Activated naive CD4-positive, alpha-beta T cell treated with anti-CD3 and anti-CD28 coated beads for 36 hours (primary cell): ENCODE measurements at regions of chr13 and their contacts with region 1.

Region 1: DNA sequence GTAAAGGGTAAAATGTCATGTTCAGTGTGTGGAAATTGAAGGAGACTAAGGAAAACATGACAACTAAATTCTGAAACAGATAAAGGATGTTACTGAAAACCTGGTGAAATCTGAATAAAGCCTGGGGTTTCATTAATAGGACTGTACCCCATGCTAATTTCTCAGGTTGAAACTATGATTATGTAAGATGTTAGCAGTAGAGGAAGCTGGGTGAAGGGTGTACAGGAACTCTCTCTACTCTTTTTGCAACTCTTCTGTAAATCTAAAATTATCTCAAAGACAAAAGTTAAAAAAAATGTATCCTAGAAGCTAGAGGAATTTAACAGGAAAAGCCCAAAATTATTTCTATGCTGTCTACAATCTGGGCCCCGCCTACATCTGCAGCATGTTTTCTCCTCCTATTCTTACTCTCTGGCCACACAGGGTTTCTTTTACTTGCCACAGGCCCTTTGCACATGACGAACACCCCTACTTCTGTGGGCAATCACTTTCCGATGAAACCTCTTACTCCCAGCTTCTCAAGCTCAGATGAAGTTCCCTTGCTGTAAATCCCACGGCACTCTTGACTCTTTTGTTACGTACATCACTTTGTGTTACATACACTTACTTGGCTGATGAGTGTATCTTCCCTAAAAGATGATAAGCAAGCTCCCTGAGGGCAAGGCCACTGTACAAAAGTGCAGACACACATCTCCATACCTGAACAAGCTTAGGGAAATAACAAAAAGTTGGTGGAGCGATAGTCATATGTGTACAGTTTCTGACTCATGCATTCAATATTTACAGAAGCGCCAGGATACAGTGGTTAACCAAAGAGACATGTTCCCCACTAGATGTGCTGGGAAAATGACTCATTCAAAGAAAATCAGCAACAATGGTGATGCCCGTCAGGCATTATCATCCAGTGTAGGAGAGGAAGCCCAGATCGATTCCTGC is 32.6 kb downstream of the RUBCNL start:
- DNase-seq: peak; percentile 68
- H3K4me3 Mint-ChIP-seq: no peak overlapping the region
- H3K27ac Mint-ChIP-seq: peak overlapping the region; percentile 94
- H3K4me1 Mint-ChIP-seq: peaks cover 24% of the 10 kb centered on the region
- H3K27me3 Mint-ChIP-seq: no peaks in the 10 kb centered on the region

Region 2: DNA sequence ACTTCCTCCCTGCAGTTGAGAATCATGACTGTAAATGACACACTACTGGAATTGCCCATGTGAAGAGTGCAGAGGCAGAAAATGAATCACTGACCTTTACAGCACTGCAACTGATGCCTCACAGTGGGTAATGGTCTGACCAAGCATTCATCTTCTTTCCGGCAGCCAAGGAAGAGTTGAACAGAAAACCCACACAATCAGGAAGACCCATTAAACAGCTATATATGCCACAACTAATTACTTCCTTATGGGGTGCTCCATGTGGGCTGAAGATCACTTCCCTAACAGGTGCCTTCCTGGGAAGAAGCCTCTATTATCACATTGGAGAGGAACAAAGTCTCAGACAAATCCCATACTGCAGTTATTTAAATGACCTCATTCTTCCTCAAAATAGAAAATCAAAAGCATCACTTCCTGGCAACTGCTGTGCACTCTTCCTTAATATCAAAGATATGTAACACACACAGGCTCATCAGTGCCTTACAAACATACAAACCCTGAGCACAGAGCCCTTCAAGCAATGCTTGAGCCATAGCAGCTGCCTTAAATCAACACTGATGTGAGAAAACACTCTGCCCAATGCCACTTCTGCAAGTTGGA is 13.2 kb before region 1 on chr13:
- CTCF ChIA-PET with region 1: interaction called, 4 read pairs
- intact Hi-C with region 1: loop called (anchors 1 kb)
- DNase-seq: peak; percentile 78
- H3K4me3 Mint-ChIP-seq: peak overlapping the region; percentile 63
- H3K27ac Mint-ChIP-seq: peak overlapping the region; percentile 92
- H3K4me1 Mint-ChIP-seq: peaks cover 52% of the 10 kb centered on the region
- H3K27me3 Mint-ChIP-seq: no peaks in the 10 kb centered on the region

Region 3: GRCh38 chr13:46369506-46370277 is 15.3 kb after region 1 on chr13:
- CTCF ChIA-PET with region 1: interaction called, 3 read pairs
- intact Hi-C with region 1: loop called (anchors 1 kb)
- DNase-seq: no peak
- H3K4me3 Mint-ChIP-seq: no peak overlapping the region
- H3K27ac Mint-ChIP-seq: no peak overlapping the region
- H3K4me1 Mint-ChIP-seq: peaks cover 16% of the 10 kb centered on the region
- H3K27me3 Mint-ChIP-seq: no peaks in the 10 kb centered on the region

Region 4: DNA sequence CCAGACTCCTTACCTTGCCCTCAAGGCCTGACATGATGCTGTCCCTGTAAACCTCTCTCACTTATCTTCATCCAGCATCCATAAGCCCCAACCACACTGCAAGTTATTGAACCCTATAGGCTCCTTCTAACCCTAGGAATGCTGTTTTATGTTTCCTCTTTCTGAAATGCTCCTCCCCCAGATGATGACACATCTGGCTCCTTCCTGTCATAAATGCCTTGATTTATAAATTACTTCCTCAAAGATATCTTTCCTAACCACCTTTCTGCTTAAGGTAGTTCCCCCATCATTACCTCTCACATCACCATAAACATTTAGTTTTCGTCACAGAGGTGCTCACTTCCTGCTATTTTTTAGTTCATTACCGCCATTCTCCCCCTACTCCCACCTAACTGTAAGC is 20.3 kb after region 1 on chr13:
- CTCF ChIA-PET with region 1: no interaction called
- intact Hi-C with region 1: loop called (anchors 1 kb)
- DNase-seq: no peak
- H3K4me3 Mint-ChIP-seq: no peak overlapping the region
- H3K27ac Mint-ChIP-seq: no peak overlapping the region
- H3K4me1 Mint-ChIP-seq: peaks cover 10% of the 10 kb centered on the region
- H3K27me3 Mint-ChIP-seq: no peaks in the 10 kb centered on the region

Region 5: GRCh38 chr13:46778890-46779289 is 424.5 kb after region 1 on chr13:
- CTCF ChIA-PET with region 1: no interaction called
- intact Hi-C with region 1: no loop called
- DNase-seq: no peak
- H3K4me3 Mint-ChIP-seq: no peak overlapping the region
- H3K27ac Mint-ChIP-seq: no peak overlapping the region
- H3K4me1 Mint-ChIP-seq: peaks cover 1% of the 10 kb centered on the region
- H3K27me3 Mint-ChIP-seq: no peaks in the 10 kb centered on the region